ENCODE measurements at regions of chr3 and their contacts with region 1.

Region 1: GRCh38 chr3:184811999-184812661 is at the start of gene VPS8:
- DNase-seq: peak; percentile 92 to 98 (median 97)
- ATAC-seq: peak; percentile 82
- H3K4me3 ChIP-seq: peak within 1 kb of the TSS; percentile 64 to 86
- H3K4me3 Mint-ChIP-seq: peak within 1 kb of the TSS; percentile 99
- H3K27ac ChIP-seq: peak within 1 kb of the TSS; percentile 82 to 87
- H3K27ac Mint-ChIP-seq: peak within 1 kb of the TSS; percentile 99
- H3K4me1 ChIP-seq: peaks cover 46% of the 10 kb centered on the region
- H3K4me1 Mint-ChIP-seq: peaks cover 50% of the 10 kb centered on the region
- H3K27me3 ChIP-seq: no peaks in the 10 kb centered on the region
- H3K27me3 Mint-ChIP-seq: no peaks in the 10 kb centered on the region
- CTCF ChIP-seq: peak; percentile 42
- total RNA-seq, gene VPS8: 61.4 to 65.0 TPM

Region 2: DNA sequence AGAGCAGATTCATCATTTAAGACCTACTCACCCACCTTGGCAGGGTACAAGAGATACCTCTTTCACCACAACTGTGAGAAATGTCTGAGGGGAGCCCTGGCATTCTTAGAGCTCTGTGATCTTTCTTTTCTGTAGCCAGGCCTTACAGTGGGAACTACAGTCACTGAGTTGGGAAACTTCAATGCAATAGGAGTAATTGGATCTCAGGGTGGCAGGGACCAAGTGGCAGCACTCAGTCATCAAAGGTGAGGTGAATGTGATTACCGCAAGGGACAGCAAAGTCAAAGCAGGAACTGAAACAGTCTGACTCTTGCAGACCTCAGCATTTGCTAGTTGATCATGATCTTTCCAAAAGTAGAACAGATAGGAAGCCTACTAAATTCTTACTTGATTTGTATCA is 1376.5 kb before region 1 on chr3:
- CTCF ChIA-PET with region 1: no interaction called
- POLR2A ChIA-PET with region 1: no interaction called
- intact Hi-C with region 1: no loop called
- DNase-seq: no peak
- ATAC-seq: no peak
- H3K4me3 ChIP-seq: no peak overlapping the region
- H3K4me3 Mint-ChIP-seq: no peak overlapping the region
- H3K27ac ChIP-seq: no peak overlapping the region
- H3K27ac Mint-ChIP-seq: no peak overlapping the region
- H3K4me1 ChIP-seq: no peaks in the 10 kb centered on the region
- H3K4me1 Mint-ChIP-seq: no peaks in the 10 kb centered on the region
- H3K27me3 ChIP-seq: no peaks in the 10 kb centered on the region
- H3K27me3 Mint-ChIP-seq: peaks cover 8% of the 10 kb centered on the region
- CTCF ChIP-seq: no peak

Region 3: GRCh38 chr3:184017672-184018423 is 794.3 kb before region 1 on chr3 and contains the start of gene ABCC5:
- CTCF ChIA-PET with region 1: no interaction called
- POLR2A ChIA-PET with region 1: no interaction called
- intact Hi-C with region 1: loop called in 1 of 2 experiments (anchors 5 kb)
- DNase-seq: peak; percentile 60 to 91 (median 80)
- ATAC-seq: peak; percentile 94
- H3K4me3 ChIP-seq: peak within 1 kb of the TSS; percentile 94 to 98
- H3K4me3 Mint-ChIP-seq: peak within 1 kb of the TSS; percentile 99
- H3K27ac ChIP-seq: peak within 1 kb of the TSS; percentile 51 to 56
- H3K27ac Mint-ChIP-seq: peak within 1 kb of the TSS; percentile 83
- H3K4me1 ChIP-seq: peaks cover 11% of the 10 kb centered on the region
- H3K4me1 Mint-ChIP-seq: peaks cover 32% of the 10 kb centered on the region
- H3K27me3 ChIP-seq: no peaks in the 10 kb centered on the region
- H3K27me3 Mint-ChIP-seq: peaks cover 12% of the 10 kb centered on the region
- CTCF ChIP-seq: peak; percentile 76
- total RNA-seq, gene ABCC5: 7.4 to 8.3 TPM

Region 4: DNA sequence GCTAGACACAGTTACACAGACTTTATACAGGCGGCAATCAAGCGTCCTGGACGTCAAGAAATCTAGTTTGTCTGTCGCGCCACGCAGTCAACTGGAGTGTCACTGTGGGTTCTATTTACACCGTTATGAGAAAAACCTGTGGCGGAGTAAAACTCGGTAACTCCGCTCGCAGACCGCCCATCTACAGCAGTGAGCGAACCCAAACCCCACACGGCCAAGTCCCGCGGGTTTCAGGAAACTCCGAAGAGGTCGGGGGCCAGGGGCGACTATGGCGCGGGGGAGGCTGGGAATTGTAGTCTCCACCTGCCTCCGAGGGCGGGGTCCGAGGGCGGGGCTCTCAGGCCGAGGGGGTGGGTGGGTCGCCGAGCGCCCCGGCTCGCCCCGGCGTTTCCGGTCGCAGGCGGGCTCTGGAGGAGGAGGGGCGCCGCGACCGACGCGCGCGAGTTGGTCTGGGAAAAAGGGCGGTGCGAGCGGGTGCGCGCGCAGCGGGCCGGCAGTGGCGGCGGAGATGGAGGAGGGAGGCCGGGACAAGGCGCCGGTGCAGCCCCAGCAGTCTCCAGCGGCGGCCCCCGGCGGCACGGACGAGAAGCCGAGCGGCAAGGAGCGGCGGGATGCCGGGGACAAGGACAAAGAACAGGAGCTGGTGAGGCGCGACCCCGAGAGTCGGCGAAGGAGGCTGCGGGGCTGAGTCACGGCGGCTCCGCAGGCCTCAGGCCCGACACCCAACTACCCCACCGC is 513.2 kb before region 1 on chr3 and contains the start of gene PSMD2:
- CTCF ChIA-PET with region 1: no interaction called
- POLR2A ChIA-PET with region 1: no interaction called
- intact Hi-C with region 1: loop called in 1 of 2 experiments (anchors 2 kb)
- DNase-seq: peak; percentile 96 to 99 (median 98)
- ATAC-seq: peak; percentile 93
- H3K4me3 ChIP-seq: peak within 1 kb of the TSS; percentile 74 to 89
- H3K4me3 Mint-ChIP-seq: peak within 1 kb of the TSS; percentile 93
- H3K27ac ChIP-seq: peak within 1 kb of the TSS; percentile 64 to 70
- H3K27ac Mint-ChIP-seq: peak within 1 kb of the TSS; percentile 91
- H3K4me1 ChIP-seq: peaks cover 10% of the 10 kb centered on the region
- H3K4me1 Mint-ChIP-seq: peaks cover 32% of the 10 kb centered on the region
- H3K27me3 ChIP-seq: no peaks in the 10 kb centered on the region
- H3K27me3 Mint-ChIP-seq: no peaks in the 10 kb centered on the region
- CTCF ChIP-seq: no peak
- total RNA-seq, gene PSMD2: 168 to 174 TPM

Region 5: DNA sequence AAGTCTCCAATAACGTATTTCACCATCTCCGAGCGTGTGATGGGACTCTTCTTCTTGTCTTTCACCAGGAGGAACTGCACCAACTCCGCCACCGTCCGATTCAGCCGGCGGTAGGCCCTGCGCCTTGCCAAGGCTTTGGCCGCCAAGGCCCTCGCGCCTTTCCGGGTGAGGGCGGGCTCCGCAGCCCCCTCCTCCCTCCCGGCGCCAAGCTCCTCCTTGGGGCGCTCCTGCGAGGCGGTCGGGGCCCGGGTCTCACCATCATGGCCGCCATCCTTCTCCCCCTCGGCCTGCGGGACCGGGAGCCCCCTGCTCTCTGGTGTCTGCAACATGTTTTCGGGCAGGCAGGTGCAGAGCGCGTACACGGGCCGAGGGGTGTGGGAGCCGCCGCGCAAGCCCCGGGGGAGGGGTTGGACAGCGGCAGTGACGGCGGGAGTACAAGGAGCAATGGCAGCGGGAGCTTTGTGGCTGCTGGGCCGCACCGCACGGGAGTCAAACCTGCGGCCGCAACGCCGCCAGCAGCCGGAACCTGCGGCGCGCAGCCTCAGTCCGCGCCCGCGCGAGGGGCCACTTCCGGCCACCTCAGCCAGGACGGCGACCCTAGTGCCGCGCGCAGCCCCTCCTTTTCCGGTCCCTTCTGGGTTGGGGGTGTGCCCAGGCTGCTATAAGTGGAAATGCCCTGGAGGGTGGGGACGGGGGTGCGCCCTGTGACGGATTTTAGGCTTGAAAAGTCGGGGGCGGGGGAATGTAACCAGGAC is 100.5 kb before region 1 on chr3 and contains the start of gene MAGEF1:
- CTCF ChIA-PET with region 1: no interaction called
- POLR2A ChIA-PET with region 1: no interaction called
- intact Hi-C with region 1: loop called (anchors 1 kb)
- DNase-seq: peak; percentile 22 to 85 (median 73)
- ATAC-seq: peak; percentile 83
- H3K4me3 ChIP-seq: peak within 1 kb of the TSS; percentile 62 to 85
- H3K4me3 Mint-ChIP-seq: peak within 1 kb of the TSS; percentile 90
- H3K27ac ChIP-seq: peak within 1 kb of the TSS; percentile 73 to 77
- H3K27ac Mint-ChIP-seq: peak within 1 kb of the TSS; percentile 91
- H3K4me1 ChIP-seq: peaks cover 14% of the 10 kb centered on the region
- H3K4me1 Mint-ChIP-seq: peaks cover 28% of the 10 kb centered on the region
- H3K27me3 ChIP-seq: no peaks in the 10 kb centered on the region
- H3K27me3 Mint-ChIP-seq: no peaks in the 10 kb centered on the region
- CTCF ChIP-seq: no peak
- total RNA-seq, gene MAGEF1: 3.2 to 3.3 TPM

Region 6: GRCh38 chr3:184795522-184796190 is 16.5 kb before region 1 on chr3:
- CTCF ChIA-PET with region 1: no interaction called
- POLR2A ChIA-PET with region 1: no interaction called
- intact Hi-C with region 1: no loop called
- DNase-seq: no peak
- ATAC-seq: no peak
- H3K4me3 ChIP-seq: no peak overlapping the region
- H3K4me3 Mint-ChIP-seq: no peak overlapping the region
- H3K27ac ChIP-seq: no peak overlapping the region
- H3K27ac Mint-ChIP-seq: no peak overlapping the region
- H3K4me1 ChIP-seq: no peaks in the 10 kb centered on the region
- H3K4me1 Mint-ChIP-seq: peaks cover 7% of the 10 kb centered on the region
- H3K27me3 ChIP-seq: peaks cover 3% of the 10 kb centered on the region in 2 experiments
- H3K27me3 Mint-ChIP-seq: peaks cover 15% of the 10 kb centered on the region
- CTCF ChIP-seq: no peak

Region 7: DNA sequence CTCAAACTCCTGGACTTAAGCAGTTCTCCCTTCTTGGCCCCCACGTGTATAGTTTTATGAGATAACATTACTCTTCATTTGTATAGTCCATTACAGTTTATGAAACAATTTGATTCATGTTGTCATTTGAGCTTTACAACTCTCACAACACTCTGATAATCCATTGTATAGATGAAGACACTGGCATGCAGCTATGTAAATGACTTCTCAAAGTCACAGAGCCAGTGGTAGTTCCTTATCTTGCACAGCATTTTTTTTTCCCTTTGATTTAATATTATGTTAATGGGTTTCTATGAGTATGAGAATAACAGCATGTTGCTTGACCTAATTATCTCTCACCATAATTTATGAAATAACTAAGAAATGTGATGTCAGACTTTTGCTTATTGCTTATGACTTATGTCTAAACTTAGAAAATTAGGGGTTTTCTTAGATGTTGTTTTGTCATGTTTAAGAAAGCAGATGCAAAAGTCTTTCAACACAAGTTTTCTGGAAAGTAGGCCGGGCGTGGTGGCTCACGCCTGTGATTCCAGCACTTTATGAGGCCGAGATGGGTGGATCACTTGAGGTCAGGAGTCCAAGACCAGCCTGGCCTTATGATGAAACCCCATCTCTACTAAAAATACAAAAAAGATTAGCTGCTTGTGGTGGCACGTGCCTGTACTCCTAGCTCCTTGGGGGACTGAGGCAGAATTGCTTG is 13.1 kb after region 1 on chr3:
- CTCF ChIA-PET with region 1: interaction called, 3 read pairs
- POLR2A ChIA-PET with region 1: interaction called, 3 read pairs
- intact Hi-C with region 1: loop called in 1 of 2 experiments (anchors 2 kb)
- DNase-seq: no peak
- ATAC-seq: no peak
- H3K4me3 ChIP-seq: no peak overlapping the region
- H3K4me3 Mint-ChIP-seq: no peak overlapping the region
- H3K27ac ChIP-seq: no peak overlapping the region
- H3K27ac Mint-ChIP-seq: no peak overlapping the region
- H3K4me1 ChIP-seq: no peaks in the 10 kb centered on the region
- H3K4me1 Mint-ChIP-seq: peaks cover 13% of the 10 kb centered on the region
- H3K27me3 ChIP-seq: no peaks in the 10 kb centered on the region
- H3K27me3 Mint-ChIP-seq: no peaks in the 10 kb centered on the region
- CTCF ChIP-seq: no peak

Region 8: GRCh38 chr3:186570096-186570940 is 1758.2 kb after region 1 on chr3 and contains the start of gene DNAJB11:
- CTCF ChIA-PET with region 1: no interaction called
- POLR2A ChIA-PET with region 1: no interaction called
- intact Hi-C with region 1: loop called in 1 of 2 experiments (anchors 10 kb)
- DNase-seq: peak; percentile 94 to 100 (median 97)
- ATAC-seq: peak; percentile 82
- H3K4me3 ChIP-seq: peak within 1 kb of the TSS; percentile 73 to 96
- H3K4me3 Mint-ChIP-seq: peak within 1 kb of the TSS; percentile 94
- H3K27ac ChIP-seq: peak within 1 kb of the TSS; percentile 94 to 97
- H3K27ac Mint-ChIP-seq: peak within 1 kb of the TSS; percentile 98
- H3K4me1 ChIP-seq: peaks cover 30% of the 10 kb centered on the region
- H3K4me1 Mint-ChIP-seq: peaks cover 59% of the 10 kb centered on the region
- H3K27me3 ChIP-seq: no peaks in the 10 kb centered on the region
- H3K27me3 Mint-ChIP-seq: no peaks in the 10 kb centered on the region
- CTCF ChIP-seq: no peak
- total RNA-seq, gene DNAJB11: 70.2 to 73.4 TPM

Measured in CD8-positive, alpha-beta T cell (primary cell).